ENCODE measurements at regions of chr21 and their contacts with region 1.

Region 1: DNA sequence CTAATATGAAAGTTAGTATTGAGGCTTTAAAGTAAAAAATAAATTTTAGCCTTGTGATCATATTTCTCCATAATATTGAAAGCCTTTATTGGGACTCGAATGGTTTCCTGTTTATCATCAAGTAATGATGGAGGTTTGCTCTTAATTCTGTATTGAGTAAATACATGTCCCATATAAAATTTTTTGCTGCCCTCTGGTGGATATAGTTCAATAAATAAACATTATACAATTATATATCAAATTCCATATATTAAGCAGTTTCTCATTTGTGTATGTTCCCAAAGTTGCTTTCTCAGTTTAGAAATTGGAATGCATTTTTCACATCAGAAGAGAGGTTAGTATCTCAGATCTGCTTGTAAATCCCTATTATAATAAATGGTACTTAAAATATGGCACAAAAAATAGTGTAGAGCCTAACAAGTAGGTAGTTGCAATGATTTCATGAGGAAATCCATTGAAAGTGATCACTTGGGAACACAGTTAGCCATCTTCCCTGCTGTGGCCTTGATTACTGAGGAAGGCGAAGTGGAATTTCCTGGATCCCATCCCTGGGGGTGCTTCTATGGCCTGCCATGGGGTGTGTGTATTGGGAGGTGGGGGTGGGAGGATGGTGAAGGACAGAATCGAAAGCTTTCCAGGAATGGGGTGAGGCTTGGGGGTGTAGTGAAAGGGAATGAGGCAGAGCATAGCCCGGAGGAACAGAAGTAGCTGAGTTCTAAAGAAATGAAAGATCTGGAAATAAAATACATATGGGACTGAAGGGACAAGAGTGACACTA is 84.1 kb upstream of the C21orf91 start:
- DNase-seq: no peak
- H3K4me3 ChIP-seq: no peak overlapping the region
- H3K27ac ChIP-seq: peak overlapping the region; percentile 35 to 76
- H3K4me1 ChIP-seq: peaks cover 53% of the 10 kb centered on the region
- H3K27me3 ChIP-seq: no peaks in the 10 kb centered on the region
- CTCF ChIP-seq: peak in 1 of 3 experiments; percentile 36
- POLR2A ChIP-seq: no peak

Region 2: GRCh38 chr21:17679002-17679600 is 224.1 kb before region 1 on chr21:
- intact Hi-C with region 1: loop called (anchors 10 kb)
- DNase-seq: no peak
- H3K4me3 ChIP-seq: no peak overlapping the region
- H3K27ac ChIP-seq: no peak overlapping the region
- H3K4me1 ChIP-seq: peaks cover under 1% of the 10 kb centered on the region
- H3K27me3 ChIP-seq: no peaks in the 10 kb centered on the region
- CTCF ChIP-seq: peak; percentile 75 to 81 (median 81)
- POLR2A ChIP-seq: no peak

Region 3: DNA sequence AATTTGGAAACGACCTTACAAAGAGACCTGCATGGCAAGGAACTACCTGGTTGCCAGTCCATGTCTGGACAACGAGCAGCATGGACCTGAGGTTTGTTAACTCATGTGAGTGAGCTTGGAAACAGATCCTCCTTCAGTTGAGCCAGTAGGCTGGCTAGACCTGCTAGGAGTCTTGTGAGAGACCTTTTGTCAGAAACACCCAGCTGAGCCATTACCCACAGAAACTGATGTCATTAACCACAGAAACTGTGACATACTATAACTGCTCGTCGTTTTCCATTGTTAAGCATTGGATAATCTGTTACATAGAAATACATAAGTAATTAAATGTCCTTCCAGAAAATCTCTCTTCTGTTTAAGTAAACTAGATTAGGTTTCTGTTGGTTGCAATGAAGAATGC is 127.0 kb after region 1 on chr21:
- intact Hi-C with region 1: no loop called
- DNase-seq: no peak
- H3K4me3 ChIP-seq: no peak overlapping the region
- H3K27ac ChIP-seq: no peak overlapping the region
- H3K4me1 ChIP-seq: no peaks in the 10 kb centered on the region
- H3K27me3 ChIP-seq: no peaks in the 10 kb centered on the region
- CTCF ChIP-seq: no peak
- POLR2A ChIP-seq: no peak